ENCODE measurements at regions of chr16 and their contacts with region 1.

Region 1: DNA sequence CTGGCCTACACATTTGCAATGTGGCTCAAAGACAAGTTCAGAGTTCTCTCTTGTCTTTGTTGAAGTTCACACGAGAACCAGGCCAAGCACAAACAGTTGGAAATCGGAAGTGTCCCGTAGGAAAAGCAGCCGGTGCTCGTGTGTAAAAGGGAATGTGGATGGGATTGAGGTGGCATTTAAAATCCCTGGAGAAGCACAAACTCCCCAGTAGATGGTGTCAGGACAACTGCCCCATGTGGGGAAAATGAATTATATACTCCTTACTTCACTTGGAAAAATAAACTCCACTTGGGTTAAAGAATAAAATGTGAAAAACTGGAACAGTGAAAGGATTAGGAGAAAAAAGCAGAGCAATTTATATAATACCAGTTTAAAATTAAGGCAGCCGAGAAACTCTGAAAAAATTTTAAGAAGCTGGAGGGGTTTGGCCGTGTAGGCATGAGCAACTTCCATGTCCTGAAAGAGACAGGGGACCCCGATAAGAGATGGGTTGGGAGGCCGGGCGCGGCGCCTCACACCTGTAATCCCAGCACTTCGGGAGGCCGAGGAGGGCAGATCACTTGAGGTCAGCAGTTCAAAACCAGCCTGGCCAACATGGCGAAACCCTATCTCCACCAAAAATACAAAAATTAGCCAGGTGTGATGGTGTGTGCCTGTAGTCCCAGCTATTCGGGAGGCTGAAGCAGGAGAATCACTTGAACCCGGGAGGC is 28.1 kb downstream of the CBFA2T3 start:
- DNase-seq: no peak
- ATAC-seq: no peak
- H3K4me3 Mint-ChIP-seq: no peak overlapping the region
- H3K27ac Mint-ChIP-seq: no peak overlapping the region
- H3K4me1 Mint-ChIP-seq: no peaks in the 10 kb centered on the region
- H3K27me3 Mint-ChIP-seq: peaks cover 3% of the 10 kb centered on the region

Region 2: DNA sequence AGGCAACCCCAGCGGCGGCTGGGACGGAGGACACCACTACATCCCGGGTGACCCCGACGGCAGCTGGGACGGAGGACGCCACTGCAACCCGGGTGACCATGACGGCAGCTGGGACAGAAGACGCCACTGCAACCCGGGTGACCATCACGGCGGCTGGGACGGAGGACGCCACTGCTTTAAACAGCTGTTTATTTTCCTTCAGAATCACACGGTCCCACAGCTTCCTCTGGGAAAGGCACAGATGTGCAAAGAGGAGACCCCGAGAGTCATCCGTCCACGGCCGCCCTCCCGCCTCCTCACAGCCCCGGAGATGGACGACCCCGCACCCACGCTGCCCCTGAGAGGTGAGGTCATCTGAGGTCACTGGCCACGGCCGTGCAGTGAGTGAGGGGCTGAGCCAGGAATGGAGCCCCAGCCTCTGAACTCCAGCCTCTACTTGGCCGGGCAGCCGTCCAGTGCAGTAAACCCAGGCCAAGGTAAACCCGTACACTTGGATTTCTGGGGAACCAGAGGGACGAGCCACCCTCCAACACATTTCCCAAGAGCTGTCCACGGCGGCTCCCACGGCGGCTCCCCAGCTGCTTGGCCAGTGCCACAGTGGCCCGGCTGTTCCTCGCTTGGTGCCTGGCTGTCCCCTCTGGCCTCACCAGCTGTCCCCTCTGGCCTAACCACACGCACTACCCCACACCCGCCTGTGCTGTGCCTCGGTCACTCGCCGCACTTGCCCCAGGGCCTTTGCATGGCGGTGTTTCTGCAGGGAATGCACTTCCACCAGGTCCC is 39.3 kb before region 1 on chr16:
- CTCF ChIA-PET with region 1: no interaction called
- POLR2A ChIA-PET with region 1: no interaction called
- intact Hi-C with region 1: loop called in 1 of 2 experiments (anchors 1 kb)
- DNase-seq: no peak
- ATAC-seq: no peak
- H3K4me3 Mint-ChIP-seq: no peak overlapping the region
- H3K27ac Mint-ChIP-seq: no peak overlapping the region
- H3K4me1 Mint-ChIP-seq: no peaks in the 10 kb centered on the region
- H3K27me3 Mint-ChIP-seq: no peaks in the 10 kb centered on the region